ENCODE measurements at regions of chr2 and their contacts with region 1.

Region 1: DNA sequence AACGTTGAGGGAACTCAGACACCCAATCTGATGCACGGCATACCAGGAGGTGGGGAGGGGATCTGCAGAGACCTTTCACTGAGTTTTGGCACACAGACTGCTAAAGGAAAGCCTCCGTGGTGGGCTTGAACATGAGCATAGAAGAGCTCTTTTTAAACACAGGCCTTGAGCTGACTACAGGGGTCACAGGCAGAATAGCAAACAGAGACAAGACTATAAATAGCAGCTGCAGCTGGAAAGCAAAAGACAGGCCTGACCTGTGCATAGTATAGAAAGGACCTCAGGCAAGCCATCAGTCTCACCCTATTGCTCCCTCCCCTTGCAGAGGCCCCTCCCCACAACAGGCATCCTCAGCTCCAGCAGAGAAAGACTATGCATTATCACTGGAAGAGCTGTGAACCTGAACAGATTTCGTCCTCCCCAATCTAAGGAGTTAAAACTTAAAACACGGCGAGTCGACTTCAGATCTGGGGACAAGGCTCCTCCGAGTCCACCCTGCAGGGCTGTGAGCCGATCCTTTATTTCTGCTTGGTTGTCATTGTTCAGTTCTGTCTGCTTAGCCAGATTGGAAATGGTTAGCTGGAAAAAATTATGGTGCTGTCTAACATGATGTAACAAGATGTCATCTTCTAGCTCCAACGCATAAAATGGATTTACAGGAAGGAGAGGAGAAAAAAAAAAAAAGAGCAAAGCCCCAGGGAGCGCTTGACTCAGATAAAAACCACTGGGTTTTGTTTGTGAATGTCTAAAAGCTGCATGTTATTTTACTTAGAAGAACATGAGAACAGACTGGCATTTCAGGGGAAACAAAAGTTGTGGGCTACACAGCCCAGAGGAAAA is 25.2 kb upstream of the LCLAT1 start:
- DNase-seq: peak; percentile 35
- ATAC-seq: peak; percentile 56
- H3K4me3 Mint-ChIP-seq: peak overlapping the region; percentile 36
- H3K27ac Mint-ChIP-seq: peak overlapping the region; percentile 80
- H3K4me1 Mint-ChIP-seq: peaks cover 32% of the 10 kb centered on the region
- H3K27me3 Mint-ChIP-seq: no peaks in the 10 kb centered on the region

Region 2: DNA sequence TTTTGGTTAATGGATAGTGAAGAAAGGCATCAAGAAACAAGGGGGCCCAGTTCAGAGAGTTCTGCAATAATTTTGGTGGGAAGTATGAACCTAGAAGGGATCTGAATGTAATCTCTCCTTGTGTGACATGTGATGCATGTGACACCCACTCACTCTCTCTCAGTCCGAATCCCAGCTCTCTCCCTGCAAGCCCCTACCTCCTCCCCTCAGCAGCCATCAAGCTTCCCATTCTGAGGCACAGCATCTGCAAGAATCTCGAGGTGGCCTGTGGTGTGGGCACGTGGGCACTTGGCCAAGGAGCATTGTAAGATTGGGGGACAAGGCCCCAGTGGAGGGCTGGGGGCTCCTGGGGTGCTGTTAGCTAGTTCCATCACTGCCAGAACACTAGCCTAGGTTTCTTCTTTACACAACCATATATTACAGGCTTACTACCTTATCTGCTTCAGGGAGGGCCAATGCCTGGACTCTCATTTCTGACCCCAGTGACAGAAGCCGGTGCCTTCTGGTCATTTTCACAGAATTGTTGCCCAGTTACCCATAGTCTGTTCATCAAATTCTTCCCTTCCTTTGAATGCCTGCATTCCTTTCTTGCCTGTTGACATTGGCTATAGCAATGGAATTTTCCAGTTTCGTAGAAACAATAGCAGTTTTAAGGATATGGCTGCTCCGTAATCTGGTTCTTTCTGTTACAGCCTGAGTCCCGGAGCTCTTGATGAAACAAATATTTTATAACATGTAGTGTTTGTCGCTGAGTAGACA is 11.9 kb after region 1 on chr2:
- CTCF ChIA-PET with region 1: interaction called, 13 read pairs
- POLR2A ChIA-PET with region 1: interaction called, 4 read pairs
- DNase-seq: no peak
- ATAC-seq: no peak
- H3K4me3 Mint-ChIP-seq: no peak overlapping the region
- H3K27ac Mint-ChIP-seq: no peak overlapping the region
- H3K4me1 Mint-ChIP-seq: peaks cover 4% of the 10 kb centered on the region
- H3K27me3 Mint-ChIP-seq: no peaks in the 10 kb centered on the region

Region 3: DNA sequence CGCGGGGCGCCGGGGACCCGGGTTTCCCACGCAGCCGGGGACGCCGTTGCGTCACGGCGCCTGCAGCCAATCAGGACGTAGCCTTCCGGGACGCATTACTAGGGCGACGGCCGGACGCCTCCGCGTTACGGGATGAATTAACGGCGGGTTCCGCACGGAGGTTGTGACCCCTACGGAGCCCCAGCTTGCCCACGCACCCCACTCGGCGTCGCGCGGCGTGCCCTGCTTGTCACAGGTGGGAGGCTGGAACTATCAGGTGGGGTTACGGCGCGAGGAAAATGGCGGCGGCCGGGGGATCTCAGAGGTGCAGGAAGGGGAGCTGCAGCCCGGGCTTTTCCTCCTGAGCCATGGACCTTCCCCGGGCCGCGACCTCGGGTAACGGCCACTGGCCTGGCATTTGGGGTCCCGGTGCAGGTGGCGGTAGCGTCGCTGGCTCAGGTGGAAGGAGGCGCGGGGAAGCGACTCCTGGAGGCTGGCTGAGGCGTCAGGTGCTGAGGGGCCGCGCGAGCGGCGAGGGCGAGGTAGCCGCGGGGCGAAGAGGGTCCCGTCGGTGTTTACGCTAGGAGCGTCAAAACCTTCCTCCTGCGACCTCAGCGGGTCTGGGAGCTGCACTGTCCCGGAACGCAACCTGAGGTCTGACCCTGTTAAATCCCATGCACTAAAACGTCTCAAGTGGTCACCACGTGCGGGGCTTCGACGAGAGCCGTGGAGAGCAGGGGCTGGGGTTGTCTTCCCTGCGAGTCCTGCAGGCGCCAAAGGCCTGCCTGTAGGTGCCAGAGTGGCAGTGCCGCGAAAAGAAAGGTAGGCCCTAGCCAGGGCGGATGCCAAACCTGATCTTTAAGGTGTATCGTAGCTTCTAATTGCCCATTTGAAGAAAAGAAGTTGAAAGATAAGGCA is 25.6 kb after region 1 on chr2 and contains the start of gene LCLAT1:
- CTCF ChIA-PET with region 1: interaction called, 10 read pairs
- POLR2A ChIA-PET with region 1: interaction called, 17 read pairs
- DNase-seq: peak; percentile 86
- ATAC-seq: peak; percentile 95
- H3K4me3 Mint-ChIP-seq: peak within 1 kb of the TSS; percentile 93
- H3K27ac Mint-ChIP-seq: peak within 1 kb of the TSS; percentile 97
- H3K4me1 Mint-ChIP-seq: peaks cover 27% of the 10 kb centered on the region
- H3K27me3 Mint-ChIP-seq: no peaks in the 10 kb centered on the region
- total RNA-seq, gene LCLAT1: 25.1 to 25.3 TPM